ENCODE measurements at regions of chr15 and their contacts with region 1.

Region 1: DNA sequence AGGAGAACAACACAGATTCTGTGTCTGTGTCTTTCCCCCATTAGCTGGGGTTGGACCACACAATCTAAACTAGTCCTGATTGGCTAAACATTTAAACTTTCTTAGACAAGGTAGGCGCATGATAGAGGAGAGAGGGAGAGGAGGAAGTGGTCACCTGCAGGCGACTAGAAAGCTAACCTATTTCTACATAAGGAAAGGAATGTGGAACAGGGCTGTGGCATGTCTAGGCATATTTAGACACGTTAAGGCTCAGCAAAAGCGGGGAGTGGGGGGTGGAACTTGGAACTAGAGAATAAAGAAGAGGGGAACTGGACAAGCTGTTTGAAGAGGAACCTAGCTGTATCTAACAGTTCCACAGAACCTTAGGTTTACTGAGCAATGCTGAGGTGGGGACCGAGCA is 12.8 kb downstream of the LRRC28 start:
- DNase-seq: no peak
- ATAC-seq: no peak
- H3K4me3 ChIP-seq: no peak overlapping the region
- H3K27ac ChIP-seq: no peak overlapping the region
- H3K4me1 ChIP-seq: peaks cover 22% of the 10 kb centered on the region
- H3K27me3 ChIP-seq: no peaks in the 10 kb centered on the region
- CTCF ChIP-seq: no peak
- POLR2A ChIP-seq: no peak

Region 2: GRCh38 chr15:99719096-99719541 is 455.0 kb after region 1 on chr15:
- intact Hi-C with region 1: loop called (anchors 10 kb)
- DNase-seq: no peak
- ATAC-seq: no peak
- H3K4me3 ChIP-seq: no peak overlapping the region
- H3K27ac ChIP-seq: no peak overlapping the region
- H3K4me1 ChIP-seq: peaks cover 11% of the 10 kb centered on the region
- H3K27me3 ChIP-seq: no peaks in the 10 kb centered on the region
- CTCF ChIP-seq: no peak
- POLR2A ChIP-seq: no peak

Measured in body of pancreas (tissue), 4 donors.